ENCODE measurements at regions of chr7 and their contacts with region 1.

Region 1: GRCh38 chr7:150356265-150356897 is 12.2 kb upstream of the REPIN1 start:
- DNase-seq: peak in 4 of 5 donors; percentile 41 to 55 (median 53)
- H3K4me3 ChIP-seq: no peak overlapping the region
- H3K4me3 Mint-ChIP-seq: peak overlapping the region in 3 of 8 donors; percentile 8 to 69 (median 26)
- H3K27ac ChIP-seq: peak overlapping the region; percentile 6
- H3K27ac Mint-ChIP-seq: peak overlapping the region in 6 of 7 donors; percentile 13 to 60 (median 44)
- H3K4me1 ChIP-seq: peaks cover 27% of the 10 kb centered on the region
- H3K4me1 Mint-ChIP-seq: peaks cover 18 to 44% (median 32%) of the 10 kb centered on the region in 4 donors
- H3K27me3 ChIP-seq: no peaks in the 10 kb centered on the region
- H3K27me3 Mint-ChIP-seq: no peaks in the 10 kb centered on the region

Region 2: GRCh38 chr7:150368096-150368883 is 11.9 kb after region 1 on chr7 and contains the start of gene REPIN1:
- CTCF ChIA-PET with region 1: interaction called, 55 read pairs
- POLR2A ChIA-PET with region 1: interaction called, 43 read pairs
- intact Hi-C with region 1: no loop called
- DNase-seq: peak; percentile 75 to 91 (median 76)
- H3K4me3 ChIP-seq: peak within 1 kb of the TSS; percentile 64 to 89
- H3K4me3 Mint-ChIP-seq: peak within 1 kb of the TSS; percentile 91 to 98 (median 95)
- H3K27ac ChIP-seq: peak within 1 kb of the TSS; percentile 75
- H3K27ac Mint-ChIP-seq: peak within 1 kb of the TSS; percentile 83 to 96 (median 93)
- H3K4me1 ChIP-seq: peaks cover 26% of the 10 kb centered on the region
- H3K4me1 Mint-ChIP-seq: peaks cover 13 to 42% (median 25%) of the 10 kb centered on the region in 4 donors
- H3K27me3 ChIP-seq: no peaks in the 10 kb centered on the region
- H3K27me3 Mint-ChIP-seq: no peaks in the 10 kb centered on the region
- total RNA-seq, gene REPIN1: 72.0 to 78.5 TPM

Region 3: GRCh38 chr7:150420987-150421674 is 64.8 kb after region 1 on chr7:
- CTCF ChIA-PET with region 1: interaction called, 28 read pairs
- POLR2A ChIA-PET with region 1: no interaction called
- intact Hi-C with region 1: loop called (anchors 1 kb)
- DNase-seq: peak; percentile 77 to 84 (median 81)
- H3K4me3 ChIP-seq: no peak overlapping the region
- H3K4me3 Mint-ChIP-seq: peak overlapping the region; percentile 9 to 71 (median 54)
- H3K27ac ChIP-seq: no peak overlapping the region
- H3K27ac Mint-ChIP-seq: peak overlapping the region in 5 of 7 donors; percentile 1 to 69 (median 10)
- H3K4me1 ChIP-seq: peaks cover 10% of the 10 kb centered on the region
- H3K4me1 Mint-ChIP-seq: peaks cover 5 to 8% (median 6%) of the 10 kb centered on the region in 4 donors
- H3K27me3 ChIP-seq: no peaks in the 10 kb centered on the region
- H3K27me3 Mint-ChIP-seq: no peaks in the 10 kb centered on the region

Region 4: DNA sequence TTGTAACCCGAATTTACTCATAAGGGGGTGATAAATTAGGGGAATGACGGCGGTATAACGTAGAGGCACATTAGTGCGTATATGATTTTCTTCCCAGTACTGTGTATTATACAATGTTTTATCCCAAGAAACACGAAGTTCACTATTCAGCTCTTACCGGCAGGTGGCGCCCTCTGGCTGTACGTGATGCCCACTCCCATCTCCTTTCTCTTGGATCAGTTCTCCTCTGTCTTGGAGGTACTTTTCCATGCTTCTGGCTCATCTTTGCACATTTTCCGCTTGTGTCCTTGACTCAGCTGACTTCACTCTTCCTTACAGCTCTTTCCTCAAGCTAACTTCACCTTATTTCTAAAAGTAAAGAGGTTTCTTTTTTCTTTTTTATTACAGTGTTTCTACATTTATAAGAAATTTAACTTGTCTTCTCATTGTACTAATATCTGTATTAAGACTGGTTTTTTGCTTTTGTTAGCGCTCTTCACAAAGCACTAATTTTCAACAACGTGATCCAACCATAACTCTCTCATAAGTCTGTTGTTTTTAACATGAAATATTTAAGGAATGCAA is 422.4 kb after region 1 on chr7:
- CTCF ChIA-PET with region 1: interaction called, 3 read pairs
- POLR2A ChIA-PET with region 1: no interaction called
- intact Hi-C with region 1: loop called (anchors 5 kb)
- DNase-seq: peak; percentile 53 to 61 (median 57)
- H3K4me3 ChIP-seq: no peak overlapping the region
- H3K4me3 Mint-ChIP-seq: no peak overlapping the region
- H3K27ac ChIP-seq: no peak overlapping the region
- H3K27ac Mint-ChIP-seq: no peak overlapping the region
- H3K4me1 ChIP-seq: no peaks in the 10 kb centered on the region
- H3K4me1 Mint-ChIP-seq: peaks cover 0 to 5% (median 5%) of the 10 kb centered on the region in 4 donors
- H3K27me3 ChIP-seq: no peaks in the 10 kb centered on the region
- H3K27me3 Mint-ChIP-seq: peaks cover 0 to 6% of the 10 kb centered on the region in 2 donors